CD4-positive, alpha-beta T cell (primary cell): ENCODE measurements at regions of chr5 and their contacts with region 1.

Region 1: DNA sequence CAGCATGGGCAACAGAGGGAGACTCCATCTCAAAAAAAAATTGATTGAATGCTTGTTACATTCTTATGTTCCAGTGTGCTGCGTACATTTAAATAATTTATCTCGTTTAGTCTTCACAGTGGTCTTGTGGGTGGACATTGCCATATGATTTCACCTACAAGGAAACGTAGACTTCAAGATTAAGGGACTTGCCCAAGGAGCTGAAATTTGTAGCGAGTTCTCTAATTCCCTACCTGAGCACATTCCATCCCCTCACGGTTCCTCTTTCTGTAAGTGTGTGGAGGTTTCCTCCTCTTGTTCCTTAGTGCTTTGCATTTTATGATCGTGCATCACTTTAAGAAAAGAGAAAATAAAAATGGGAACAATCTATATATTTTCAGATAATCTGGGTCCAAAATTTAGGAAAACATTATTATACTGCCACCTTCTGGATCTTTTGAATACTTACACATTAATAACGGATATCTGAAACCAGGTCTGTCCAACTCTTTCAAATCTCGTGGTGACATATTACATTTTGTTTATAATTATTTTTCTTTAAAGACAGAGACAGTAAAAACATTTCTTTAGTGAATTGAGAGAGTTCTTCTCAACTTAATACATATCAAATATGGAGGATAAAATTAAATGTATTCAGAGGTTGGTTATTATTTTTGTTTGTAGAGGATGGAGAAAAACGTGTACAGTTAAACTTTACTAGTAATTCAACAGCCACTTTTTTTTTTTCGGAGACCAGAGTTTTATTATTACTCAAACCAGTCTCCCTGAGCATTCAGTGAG is 29.9 kb upstream of the C7 start:
- DNase-seq: peak in 3 of 14 experiments; percentile 31 to 45 (median 35)
- ATAC-seq: peak; percentile 46
- H3K4me3 ChIP-seq: no peak overlapping the region
- H3K4me3 Mint-ChIP-seq: no peak overlapping the region
- H3K27ac ChIP-seq: no peak overlapping the region
- H3K27ac Mint-ChIP-seq: no peak overlapping the region
- H3K4me1 ChIP-seq: no peaks in the 10 kb centered on the region
- H3K4me1 Mint-ChIP-seq: no peaks in the 10 kb centered on the region
- H3K27me3 ChIP-seq: no peaks in the 10 kb centered on the region
- H3K27me3 Mint-ChIP-seq: peaks cover 5% of the 10 kb centered on the region
- CTCF ChIP-seq: peak; percentile 77

Region 2: GRCh38 chr5:39578887-39579497 is 1300.4 kb before region 1 on chr5:
- CTCF ChIA-PET with region 1: no interaction called
- POLR2A ChIA-PET with region 1: no interaction called
- intact Hi-C with region 1: loop called (anchors 2 to 5 kb)
- DNase-seq: peak in 3 of 14 experiments; percentile 21 to 52 (median 31)
- ATAC-seq: no peak
- H3K4me3 ChIP-seq: no peak overlapping the region
- H3K4me3 Mint-ChIP-seq: no peak overlapping the region
- H3K27ac ChIP-seq: no peak overlapping the region
- H3K27ac Mint-ChIP-seq: no peak overlapping the region
- H3K4me1 ChIP-seq: no peaks in the 10 kb centered on the region
- H3K4me1 Mint-ChIP-seq: peaks cover 10% of the 10 kb centered on the region
- H3K27me3 ChIP-seq: no peaks in the 10 kb centered on the region
- H3K27me3 Mint-ChIP-seq: peaks cover 6% of the 10 kb centered on the region
- CTCF ChIP-seq: peak; percentile 91

Region 3: GRCh38 chr5:39714036-39714698 is 1165.2 kb before region 1 on chr5:
- CTCF ChIA-PET with region 1: no interaction called
- POLR2A ChIA-PET with region 1: no interaction called
- intact Hi-C with region 1: loop called (anchors 1 to 2 kb)
- DNase-seq: peak in 11 of 14 experiments; percentile 6 to 71 (median 18)
- ATAC-seq: peak; percentile 34
- H3K4me3 ChIP-seq: no peak overlapping the region
- H3K4me3 Mint-ChIP-seq: no peak overlapping the region
- H3K27ac ChIP-seq: no peak overlapping the region
- H3K27ac Mint-ChIP-seq: no peak overlapping the region
- H3K4me1 ChIP-seq: no peaks in the 10 kb centered on the region
- H3K4me1 Mint-ChIP-seq: no peaks in the 10 kb centered on the region
- H3K27me3 ChIP-seq: peaks cover under 1 to 2% of the 10 kb centered on the region in 2 experiments
- H3K27me3 Mint-ChIP-seq: peaks cover 11% of the 10 kb centered on the region
- CTCF ChIP-seq: peak; percentile 61

Region 4: DNA sequence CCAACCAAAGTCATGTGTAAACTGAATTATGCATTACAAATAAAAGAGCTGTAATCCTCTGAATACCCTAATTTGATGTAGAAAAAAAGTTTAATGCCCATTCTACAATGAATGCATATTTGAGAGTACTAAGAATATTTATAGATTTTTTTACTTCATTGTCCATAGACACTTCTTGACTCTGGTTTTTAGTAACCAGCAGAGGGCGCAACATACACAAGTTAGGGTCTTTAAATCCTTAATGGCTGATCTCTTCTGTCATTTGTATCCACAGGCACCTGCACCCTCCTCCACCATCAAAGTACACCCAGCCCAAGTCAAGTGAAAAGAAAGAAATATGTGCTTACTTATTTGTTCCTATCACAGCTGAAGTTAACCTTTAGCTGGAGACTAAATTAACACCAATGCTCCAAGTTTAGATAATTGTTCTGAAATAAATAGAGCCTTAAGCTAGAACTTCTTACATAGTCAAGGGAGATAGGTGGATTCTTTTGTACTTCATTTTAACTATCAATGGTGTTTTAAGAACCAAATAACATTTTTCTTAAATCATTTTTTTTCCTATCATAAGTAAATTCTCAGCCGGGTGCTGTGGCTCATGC is 930.4 kb before region 1 on chr5:
- CTCF ChIA-PET with region 1: no interaction called
- POLR2A ChIA-PET with region 1: no interaction called
- intact Hi-C with region 1: loop called (anchors 2 to 5 kb)
- DNase-seq: peak; percentile 7 to 85 (median 50)
- ATAC-seq: peak; percentile 77
- H3K4me3 ChIP-seq: no peak overlapping the region
- H3K4me3 Mint-ChIP-seq: no peak overlapping the region
- H3K27ac ChIP-seq: no peak overlapping the region
- H3K27ac Mint-ChIP-seq: no peak overlapping the region
- H3K4me1 ChIP-seq: no peaks in the 10 kb centered on the region
- H3K4me1 Mint-ChIP-seq: peaks cover 5% of the 10 kb centered on the region
- H3K27me3 ChIP-seq: no peaks in the 10 kb centered on the region
- H3K27me3 Mint-ChIP-seq: no peaks in the 10 kb centered on the region
- CTCF ChIP-seq: peak; percentile 72

Region 5: DNA sequence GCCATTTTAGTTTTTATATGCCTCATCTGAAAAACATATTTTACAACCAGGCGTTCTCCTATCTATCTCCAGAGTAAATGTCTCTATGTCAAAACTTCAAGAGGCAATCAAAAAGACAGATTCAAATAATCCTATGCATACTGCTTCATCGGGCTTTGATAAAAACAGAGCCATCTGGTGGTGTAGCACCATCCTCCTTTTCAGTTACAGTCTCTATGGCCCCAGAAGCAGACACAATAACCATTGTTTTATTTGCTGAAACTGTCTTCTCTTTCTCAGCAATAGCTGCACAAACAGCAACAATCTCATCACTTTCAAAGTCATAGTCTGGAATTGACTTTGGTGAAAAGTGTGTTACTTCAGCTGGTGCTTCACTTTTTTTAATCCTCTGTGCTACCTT is 163.4 kb before region 1 on chr5:
- CTCF ChIA-PET with region 1: no interaction called
- POLR2A ChIA-PET with region 1: no interaction called
- intact Hi-C with region 1: no loop called
- DNase-seq: peak in 1 of 14 experiments; percentile 30
- ATAC-seq: no peak
- H3K4me3 ChIP-seq: no peak overlapping the region
- H3K4me3 Mint-ChIP-seq: no peak overlapping the region
- H3K27ac ChIP-seq: no peak overlapping the region
- H3K27ac Mint-ChIP-seq: peak overlapping the region; percentile 22
- H3K4me1 ChIP-seq: no peaks in the 10 kb centered on the region
- H3K4me1 Mint-ChIP-seq: peaks cover 16% of the 10 kb centered on the region
- H3K27me3 ChIP-seq: no peaks in the 10 kb centered on the region
- H3K27me3 Mint-ChIP-seq: no peaks in the 10 kb centered on the region
- CTCF ChIP-seq: no peak

Region 6: DNA sequence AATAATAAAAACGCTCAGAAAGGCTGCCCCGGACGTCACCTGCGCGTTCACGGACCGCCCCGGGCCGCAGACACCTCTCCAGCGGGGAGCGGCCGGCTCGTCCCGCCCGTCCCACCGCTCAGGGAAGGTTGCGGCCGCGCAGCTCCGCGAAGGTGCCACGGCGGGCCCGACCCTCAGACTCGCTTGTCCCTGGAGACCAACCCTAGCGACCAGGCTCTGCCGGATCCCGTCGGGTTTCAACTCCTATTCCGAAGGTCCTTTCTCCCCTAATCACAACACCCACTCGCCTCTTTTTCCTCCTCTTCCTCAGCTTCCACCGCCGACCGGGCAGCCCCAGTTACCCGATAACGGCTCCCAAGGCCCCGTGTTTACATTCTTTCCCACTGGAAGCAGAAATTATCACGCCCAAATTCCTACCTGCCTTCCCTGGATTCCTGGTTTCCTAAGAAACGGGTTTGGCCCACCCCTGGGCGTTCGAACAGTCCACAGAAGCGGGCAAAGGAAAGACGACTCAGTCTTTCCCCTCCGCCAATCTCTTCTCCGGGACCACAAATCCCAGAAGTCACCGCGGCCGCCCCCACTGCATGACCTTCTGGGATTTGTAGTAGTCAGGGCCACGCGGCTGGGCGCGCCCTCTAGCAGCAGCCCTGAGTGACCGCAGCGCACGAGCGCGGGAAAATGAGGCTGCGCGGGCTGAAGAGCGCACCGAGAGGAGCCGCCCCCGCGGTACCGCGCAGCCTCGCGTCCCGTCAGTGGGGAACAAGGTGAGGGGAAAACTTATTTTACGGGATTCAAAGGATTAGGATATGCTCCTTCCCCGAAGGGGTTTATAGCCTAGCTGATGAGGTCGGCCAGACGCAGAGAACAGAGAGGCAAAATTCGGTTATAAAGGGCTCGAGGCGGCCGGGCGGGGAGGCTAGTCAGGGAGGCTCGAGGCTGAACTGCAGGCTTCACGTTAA is 123.7 kb before region 1 on chr5 and contains the start of gene TTC33:
- CTCF ChIA-PET with region 1: interaction called, 3 read pairs
- POLR2A ChIA-PET with region 1: no interaction called
- intact Hi-C with region 1: loop called (anchors 1 to 5 kb)
- DNase-seq: peak; percentile 86 to 96 (median 92)
- ATAC-seq: peak; percentile 80
- H3K4me3 ChIP-seq: peak within 1 kb of the TSS; percentile 89
- H3K4me3 Mint-ChIP-seq: no peak within 1 kb of the TSS
- H3K27ac ChIP-seq: peak within 1 kb of the TSS; percentile 87 to 89
- H3K27ac Mint-ChIP-seq: no peak within 1 kb of the TSS
- H3K4me1 ChIP-seq: peaks cover 14% of the 10 kb centered on the region
- H3K4me1 Mint-ChIP-seq: peaks cover 25% of the 10 kb centered on the region
- H3K27me3 ChIP-seq: no peaks in the 10 kb centered on the region
- H3K27me3 Mint-ChIP-seq: no peaks in the 10 kb centered on the region
- CTCF ChIP-seq: peak; percentile 51
- total RNA-seq, gene TTC33: 8.7 to 12.0 TPM

Region 7: DNA sequence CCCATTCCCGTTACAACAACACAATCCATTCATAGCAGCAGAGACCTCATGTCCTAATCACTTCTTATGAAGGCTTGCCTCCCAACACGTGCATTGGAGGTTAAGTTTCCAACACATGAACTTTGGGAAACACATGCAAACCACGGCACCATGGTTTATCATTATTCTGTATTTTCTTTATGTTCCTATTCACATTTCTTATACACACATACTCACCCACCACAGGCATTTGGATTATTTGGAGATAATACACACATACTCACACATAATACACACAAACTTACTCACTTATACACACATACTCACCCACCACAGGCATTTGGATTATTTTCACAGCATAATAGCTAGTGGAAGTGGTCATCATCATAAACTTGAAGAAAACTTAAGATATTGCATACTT is 105.5 kb after region 1 on chr5:
- CTCF ChIA-PET with region 1: no interaction called
- POLR2A ChIA-PET with region 1: no interaction called
- intact Hi-C with region 1: no loop called
- DNase-seq: no peak
- ATAC-seq: no peak
- H3K4me3 ChIP-seq: no peak overlapping the region
- H3K4me3 Mint-ChIP-seq: no peak overlapping the region
- H3K27ac ChIP-seq: no peak overlapping the region
- H3K27ac Mint-ChIP-seq: no peak overlapping the region
- H3K4me1 ChIP-seq: no peaks in the 10 kb centered on the region
- H3K4me1 Mint-ChIP-seq: no peaks in the 10 kb centered on the region
- H3K27me3 ChIP-seq: no peaks in the 10 kb centered on the region
- H3K27me3 Mint-ChIP-seq: peaks cover 23% of the 10 kb centered on the region
- CTCF ChIP-seq: no peak

Region 8: DNA sequence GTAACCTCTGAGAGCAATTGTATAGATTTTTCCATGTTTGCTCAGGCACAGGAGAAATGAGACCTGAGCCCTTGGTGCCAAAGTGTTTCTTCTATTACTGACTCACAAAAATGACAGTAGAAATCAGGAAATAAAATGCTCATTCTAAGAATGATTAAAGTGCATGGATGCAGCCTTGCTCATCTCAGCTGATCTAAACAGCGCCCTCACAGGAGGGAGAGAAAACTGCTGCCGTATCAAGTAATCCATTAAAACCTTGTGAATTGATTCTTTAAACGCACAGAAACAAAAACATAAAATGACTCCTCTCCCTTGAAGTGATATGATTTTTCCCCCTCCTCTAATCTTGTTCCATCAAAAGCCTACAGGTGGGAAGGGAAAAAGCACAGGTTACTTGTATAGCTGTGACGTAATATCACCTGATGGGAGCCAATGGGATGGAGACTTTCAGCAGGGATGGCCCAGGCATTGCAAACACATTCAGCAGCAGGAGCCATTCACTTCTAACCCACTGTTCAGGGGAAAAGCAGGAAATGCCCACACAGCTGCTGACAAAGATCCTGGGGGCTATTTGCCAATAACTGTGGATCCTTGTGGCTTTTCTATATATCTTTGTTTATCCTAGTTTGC is 554.3 kb after region 1 on chr5:
- CTCF ChIA-PET with region 1: no interaction called
- POLR2A ChIA-PET with region 1: no interaction called
- intact Hi-C with region 1: no loop called
- DNase-seq: no peak
- ATAC-seq: no peak
- H3K4me3 ChIP-seq: no peak overlapping the region
- H3K4me3 Mint-ChIP-seq: no peak overlapping the region
- H3K27ac ChIP-seq: no peak overlapping the region
- H3K27ac Mint-ChIP-seq: no peak overlapping the region
- H3K4me1 ChIP-seq: no peaks in the 10 kb centered on the region
- H3K4me1 Mint-ChIP-seq: no peaks in the 10 kb centered on the region
- H3K27me3 ChIP-seq: no peaks in the 10 kb centered on the region
- H3K27me3 Mint-ChIP-seq: no peaks in the 10 kb centered on the region
- CTCF ChIP-seq: no peak